Caco-2 (cell line): ENCODE measurements at regions of chr12 and their contacts with region 1.

Region 1: DNA sequence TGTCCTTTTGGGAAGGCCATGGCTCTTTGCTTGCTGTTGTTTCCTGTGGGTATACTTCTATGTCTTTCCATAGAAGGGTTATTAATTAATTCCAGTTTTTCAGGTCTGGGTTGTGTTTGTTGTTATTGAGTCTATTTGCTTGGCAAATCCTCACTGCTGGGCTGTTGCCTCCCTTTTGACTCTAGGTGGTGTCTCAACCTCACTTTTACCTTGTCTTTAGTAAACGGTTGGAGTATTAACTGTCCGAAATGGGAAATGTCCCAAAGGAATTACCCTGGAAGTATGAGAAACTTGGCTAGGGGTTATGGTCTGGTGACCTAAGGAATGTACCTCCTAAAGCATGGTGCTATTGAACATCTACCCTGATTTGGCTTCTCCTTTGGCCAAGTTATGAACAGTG is 16.7 kb downstream of the PRH1 start:
- DNase-seq: peak in 1 of 2 experiments; percentile 58
- H3K4me3 ChIP-seq: no peak overlapping the region
- H3K4me3 Mint-ChIP-seq: no peak overlapping the region
- H3K27ac Mint-ChIP-seq: no peak overlapping the region
- H3K4me1 ChIP-seq: no peaks in the 10 kb centered on the region
- H3K4me1 Mint-ChIP-seq: peaks cover 7% of the 10 kb centered on the region
- H3K27me3 ChIP-seq: no peaks in the 10 kb centered on the region
- H3K27me3 Mint-ChIP-seq: no peaks in the 10 kb centered on the region
- CTCF ChIP-seq: peak; percentile 64 to 76

Region 2: DNA sequence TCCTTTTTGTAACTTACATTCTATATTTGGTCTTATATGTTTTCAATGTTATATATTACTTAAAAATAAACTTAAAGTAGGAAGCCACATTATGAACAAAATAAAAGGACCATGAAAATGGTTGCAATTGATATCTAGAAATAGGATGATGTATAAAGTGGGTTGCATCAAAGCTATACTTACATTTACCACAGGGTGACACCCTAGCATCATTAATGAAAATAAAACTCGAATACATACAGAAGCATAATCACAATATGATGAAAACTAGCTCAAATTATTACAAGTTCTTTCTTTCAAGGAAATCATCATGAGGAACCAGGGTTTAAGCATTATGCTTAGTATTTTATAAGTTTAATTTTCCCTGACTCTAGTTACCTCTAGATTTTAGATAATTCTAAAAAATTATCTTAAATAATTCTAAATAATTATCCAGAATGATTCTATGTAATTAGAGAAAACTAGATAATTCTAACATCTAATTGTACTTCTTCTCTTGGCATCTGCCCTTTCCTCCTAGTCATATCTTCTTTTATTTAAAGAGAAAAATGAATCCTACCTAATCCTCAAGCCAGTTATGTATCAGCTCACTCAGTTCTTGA is 96.1 kb before region 1 on chr12:
- CTCF ChIA-PET with region 1: no interaction called
- POLR2A ChIA-PET with region 1: no interaction called
- intact Hi-C with region 1: loop called (anchors 2 kb)
- DNase-seq: peak in 1 of 2 experiments; percentile 43
- H3K4me3 ChIP-seq: no peak overlapping the region
- H3K4me3 Mint-ChIP-seq: no peak overlapping the region
- H3K27ac Mint-ChIP-seq: no peak overlapping the region
- H3K4me1 ChIP-seq: no peaks in the 10 kb centered on the region
- H3K4me1 Mint-ChIP-seq: no peaks in the 10 kb centered on the region
- H3K27me3 ChIP-seq: peaks cover 3% of the 10 kb centered on the region; the same call in 1 of the 2 replicates
- H3K27me3 Mint-ChIP-seq: peaks cover 39% of the 10 kb centered on the region
- CTCF ChIP-seq: peak; percentile 52 to 78

Region 3: GRCh38 chr12:10802587-10802986 is 64.8 kb before region 1 on chr12 and contains the start of gene TAS2R7:
- CTCF ChIA-PET with region 1: no interaction called
- POLR2A ChIA-PET with region 1: no interaction called
- intact Hi-C with region 1: no loop called
- DNase-seq: no peak
- H3K4me3 ChIP-seq: no peak within 1 kb of the TSS
- H3K4me3 Mint-ChIP-seq: no peak within 1 kb of the TSS
- H3K27ac Mint-ChIP-seq: no peak within 1 kb of the TSS
- H3K4me1 ChIP-seq: no peaks in the 10 kb centered on the region
- H3K4me1 Mint-ChIP-seq: no peaks in the 10 kb centered on the region
- H3K27me3 ChIP-seq: peaks cover 2% of the 10 kb centered on the region; the same call in 1 of the 2 replicates
- H3K27me3 Mint-ChIP-seq: peaks cover 24% of the 10 kb centered on the region
- CTCF ChIP-seq: no peak
- total RNA-seq, gene TAS2R7: not detected in 2 replicates

Region 4: GRCh38 chr12:10901427-10901826 is 34.0 kb after region 1 on chr12:
- CTCF ChIA-PET with region 1: interaction called, 4 read pairs
- POLR2A ChIA-PET with region 1: no interaction called
- intact Hi-C with region 1: loop called (anchors 1 kb)
- DNase-seq: peak in 1 of 2 experiments; percentile 36
- H3K4me3 ChIP-seq: no peak overlapping the region
- H3K4me3 Mint-ChIP-seq: no peak overlapping the region
- H3K27ac Mint-ChIP-seq: peak overlapping the region; percentile 52
- H3K4me1 ChIP-seq: no peaks in the 10 kb centered on the region
- H3K4me1 Mint-ChIP-seq: peaks cover 7% of the 10 kb centered on the region
- H3K27me3 ChIP-seq: no peaks in the 10 kb centered on the region
- H3K27me3 Mint-ChIP-seq: no peaks in the 10 kb centered on the region
- CTCF ChIP-seq: peak; percentile 54 to 55

Region 5: GRCh38 chr12:10936506-10936905 is 69.1 kb after region 1 on chr12:
- CTCF ChIA-PET with region 1: interaction called, 4 read pairs
- POLR2A ChIA-PET with region 1: no interaction called
- intact Hi-C with region 1: loop called (anchors 1 kb)
- DNase-seq: no peak
- H3K4me3 ChIP-seq: no peak overlapping the region
- H3K4me3 Mint-ChIP-seq: no peak overlapping the region
- H3K27ac Mint-ChIP-seq: no peak overlapping the region
- H3K4me1 ChIP-seq: 0 out of 2 replicates have a peak, but pooled peaks cover 4% of the 10 kb centered on the region
- H3K4me1 Mint-ChIP-seq: no peaks in the 10 kb centered on the region
- H3K27me3 ChIP-seq: no peaks in the 10 kb centered on the region
- H3K27me3 Mint-ChIP-seq: no peaks in the 10 kb centered on the region
- CTCF ChIP-seq: no peak

Region 6: DNA sequence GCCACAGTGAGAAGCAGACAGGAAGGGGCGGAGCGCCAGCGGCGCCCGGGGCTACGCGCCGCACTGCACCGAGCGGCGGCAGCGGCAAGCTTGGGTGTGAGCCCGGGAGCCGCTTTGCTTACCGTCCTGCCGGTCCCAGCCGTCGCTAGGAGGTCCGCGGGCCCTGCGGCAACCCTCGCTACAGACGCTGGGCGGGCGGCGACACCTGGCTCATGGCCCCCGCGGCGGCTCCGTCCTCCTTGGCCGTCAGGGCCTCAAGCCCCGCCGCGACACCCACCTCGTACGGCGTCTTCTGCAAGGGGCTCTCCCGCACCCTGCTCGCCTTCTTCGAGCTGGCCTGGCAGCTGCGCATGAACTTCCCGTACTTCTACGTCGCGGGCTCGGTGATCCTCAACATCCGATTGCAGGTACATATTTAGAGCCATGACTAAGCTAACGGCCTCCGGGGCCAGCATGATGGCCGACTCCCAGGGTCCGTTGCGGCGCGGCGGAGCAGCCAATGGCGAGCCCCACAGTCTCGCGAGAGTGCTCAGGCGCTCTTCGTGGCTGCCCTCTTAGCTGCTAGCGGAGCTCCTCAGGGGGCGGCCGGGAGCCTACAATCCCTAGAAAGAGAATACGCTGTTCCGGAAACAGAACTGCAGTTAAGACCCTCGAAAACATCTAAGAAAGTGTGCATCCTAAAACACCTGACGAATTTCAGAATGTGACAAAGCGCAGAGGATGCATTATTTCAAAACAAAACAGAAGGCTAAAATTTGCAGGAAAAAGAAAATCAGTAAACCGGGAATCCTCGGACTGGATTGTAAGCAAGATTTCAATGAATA is 304.0 kb after region 1 on chr12 and contains the start of gene SMIM10L1:
- CTCF ChIA-PET with region 1: no interaction called
- POLR2A ChIA-PET with region 1: no interaction called
- intact Hi-C with region 1: loop called (anchors 1 kb)
- DNase-seq: peak; percentile 96 to 97
- H3K4me3 ChIP-seq: peak within 1 kb of the TSS; percentile 98
- H3K4me3 Mint-ChIP-seq: peak within 1 kb of the TSS; percentile 99
- H3K27ac Mint-ChIP-seq: peak within 1 kb of the TSS; percentile 100
- H3K4me1 ChIP-seq: peaks cover 8% of the 10 kb centered on the region; the same call in 1 of the 2 replicates
- H3K4me1 Mint-ChIP-seq: peaks cover 28% of the 10 kb centered on the region
- H3K27me3 ChIP-seq: no peaks in the 10 kb centered on the region
- H3K27me3 Mint-ChIP-seq: no peaks in the 10 kb centered on the region
- CTCF ChIP-seq: peak in 1 of 2 experiments; percentile 8
- total RNA-seq, gene SMIM10L1: 22.4 and 24.9 TPM in 2 replicates

Region 7: GRCh38 chr12:11202811-11203210 is 335.4 kb after region 1 on chr12:
- CTCF ChIA-PET with region 1: interaction called, 4 read pairs
- POLR2A ChIA-PET with region 1: no interaction called
- intact Hi-C with region 1: loop called (anchors 1 kb)
- DNase-seq: no peak
- H3K4me3 ChIP-seq: no peak overlapping the region
- H3K4me3 Mint-ChIP-seq: no peak overlapping the region
- H3K27ac Mint-ChIP-seq: no peak overlapping the region
- H3K4me1 ChIP-seq: no peaks in the 10 kb centered on the region
- H3K4me1 Mint-ChIP-seq: no peaks in the 10 kb centered on the region
- H3K27me3 ChIP-seq: no peaks in the 10 kb centered on the region
- H3K27me3 Mint-ChIP-seq: peaks cover 2% of the 10 kb centered on the region
- CTCF ChIP-seq: no peak

Region 8: GRCh38 chr12:11486623-11487444 is 619.5 kb after region 1 on chr12:
- CTCF ChIA-PET with region 1: no interaction called
- POLR2A ChIA-PET with region 1: no interaction called
- intact Hi-C with region 1: loop called (anchors 1 kb)
- DNase-seq: peak; percentile 83 to 85
- H3K4me3 ChIP-seq: no peak overlapping the region
- H3K4me3 Mint-ChIP-seq: no peak overlapping the region
- H3K27ac Mint-ChIP-seq: no peak overlapping the region
- H3K4me1 ChIP-seq: no peaks in the 10 kb centered on the region
- H3K4me1 Mint-ChIP-seq: no peaks in the 10 kb centered on the region
- H3K27me3 ChIP-seq: no peaks in the 10 kb centered on the region; the same call in 1 of the 2 replicates
- H3K27me3 Mint-ChIP-seq: peaks cover 11% of the 10 kb centered on the region
- CTCF ChIP-seq: peak; percentile 96 to 100